ENCODE measurements at regions of chr2 and their contacts with region 1.

Region 1: DNA sequence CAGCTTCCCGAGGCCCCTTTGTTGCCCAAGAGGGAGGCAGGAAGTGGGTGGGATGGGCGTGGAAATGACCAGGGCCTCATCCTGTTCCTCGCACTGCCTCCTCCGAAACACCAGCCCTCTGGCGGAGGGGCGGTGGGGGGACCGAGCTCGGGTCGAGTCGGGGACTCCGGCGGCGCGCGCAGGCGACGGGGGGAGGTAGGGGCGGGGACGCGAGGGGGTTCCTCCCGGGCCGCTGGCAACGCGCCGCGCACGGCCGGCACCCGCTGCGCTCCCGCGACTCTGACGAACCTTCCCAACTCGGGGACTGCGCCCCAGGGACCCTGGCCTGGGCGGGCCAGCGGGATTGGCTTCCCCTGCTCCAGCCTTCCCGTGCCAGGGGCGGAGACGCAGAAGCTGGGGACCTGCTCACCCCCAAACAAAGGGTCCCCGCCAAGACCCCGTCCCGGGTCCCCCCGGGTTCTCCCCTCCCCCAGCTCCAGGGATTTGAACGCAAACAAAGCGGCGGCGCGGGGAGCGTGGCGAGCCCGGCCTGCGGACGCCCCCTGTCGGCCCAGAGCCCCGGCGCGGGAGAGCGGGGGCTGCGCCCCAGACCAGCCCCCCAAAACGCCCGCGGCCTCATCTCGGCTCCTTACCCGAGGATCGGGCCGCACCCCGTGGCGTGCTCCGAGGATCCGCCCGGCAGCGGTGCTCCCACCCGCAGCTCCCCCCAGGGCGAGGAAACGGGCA is 1.2 kb downstream of the SEMA4C start:
- DNase-seq: peak; percentile 62
- ATAC-seq: peak; percentile 22
- H3K4me3 ChIP-seq: peak overlapping the region; percentile 4 to 84 (median 57)
- H3K4me3 Mint-ChIP-seq: peak overlapping the region; percentile 78
- H3K27ac ChIP-seq: no peak overlapping the region
- H3K27ac Mint-ChIP-seq: no peak overlapping the region
- H3K4me1 ChIP-seq: peaks cover 29 to 37% of the 10 kb centered on the region in 2 donors
- H3K4me1 Mint-ChIP-seq: peaks cover 25% of the 10 kb centered on the region
- H3K27me3 ChIP-seq: peaks cover 0 to 41% (median 14%) of the 10 kb centered on the region in 4 experiments
- H3K27me3 Mint-ChIP-seq: peaks cover 30% of the 10 kb centered on the region
- CTCF ChIP-seq: peak; percentile 63

Region 2: DNA sequence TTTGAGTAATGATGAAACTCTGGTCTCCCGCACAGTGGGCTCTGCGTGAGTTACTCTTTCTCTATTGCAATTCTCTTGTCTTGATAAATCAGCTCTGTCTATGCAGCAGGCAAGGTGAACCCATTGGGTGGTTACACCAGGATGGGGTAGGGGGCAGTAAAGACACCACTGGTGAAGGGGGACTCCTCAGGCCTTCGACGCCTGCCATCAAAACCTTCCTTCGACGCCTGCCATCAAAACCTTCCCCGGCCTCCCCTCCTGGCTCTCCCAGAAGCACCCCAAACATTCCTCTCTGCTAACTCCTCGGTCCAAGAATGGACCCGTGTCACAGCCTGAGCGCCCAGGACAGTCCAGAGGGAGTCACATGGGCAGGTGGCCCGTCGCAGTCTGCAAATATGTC is 655.3 kb before region 1 on chr2:
- CTCF ChIA-PET with region 1: no interaction called
- POLR2A ChIA-PET with region 1: no interaction called
- intact Hi-C with region 1: no loop called
- DNase-seq: no peak
- ATAC-seq: no peak
- H3K4me3 ChIP-seq: no peak overlapping the region
- H3K4me3 Mint-ChIP-seq: no peak overlapping the region
- H3K27ac ChIP-seq: no peak overlapping the region
- H3K27ac Mint-ChIP-seq: no peak overlapping the region
- H3K4me1 ChIP-seq: peaks cover 8 to 31% of the 10 kb centered on the region in 2 donors
- H3K4me1 Mint-ChIP-seq: peaks cover 33% of the 10 kb centered on the region
- H3K27me3 ChIP-seq: no peaks in the 10 kb centered on the region
- H3K27me3 Mint-ChIP-seq: no peaks in the 10 kb centered on the region
- CTCF ChIP-seq: no peak

Region 3: GRCh38 chr2:96792772-96793749 is 75.7 kb before region 1 on chr2:
- CTCF ChIA-PET with region 1: no interaction called
- POLR2A ChIA-PET with region 1: no interaction called
- intact Hi-C with region 1: no loop called
- DNase-seq: no peak
- ATAC-seq: no peak
- H3K4me3 ChIP-seq: no peak overlapping the region
- H3K4me3 Mint-ChIP-seq: no peak overlapping the region
- H3K27ac ChIP-seq: no peak overlapping the region
- H3K27ac Mint-ChIP-seq: peak overlapping the region; percentile 11
- H3K4me1 ChIP-seq: no peaks in the 10 kb centered on the region
- H3K4me1 Mint-ChIP-seq: peaks cover 2% of the 10 kb centered on the region
- H3K27me3 ChIP-seq: no peaks in the 10 kb centered on the region
- H3K27me3 Mint-ChIP-seq: no peaks in the 10 kb centered on the region
- CTCF ChIP-seq: no peak

Region 4: DNA sequence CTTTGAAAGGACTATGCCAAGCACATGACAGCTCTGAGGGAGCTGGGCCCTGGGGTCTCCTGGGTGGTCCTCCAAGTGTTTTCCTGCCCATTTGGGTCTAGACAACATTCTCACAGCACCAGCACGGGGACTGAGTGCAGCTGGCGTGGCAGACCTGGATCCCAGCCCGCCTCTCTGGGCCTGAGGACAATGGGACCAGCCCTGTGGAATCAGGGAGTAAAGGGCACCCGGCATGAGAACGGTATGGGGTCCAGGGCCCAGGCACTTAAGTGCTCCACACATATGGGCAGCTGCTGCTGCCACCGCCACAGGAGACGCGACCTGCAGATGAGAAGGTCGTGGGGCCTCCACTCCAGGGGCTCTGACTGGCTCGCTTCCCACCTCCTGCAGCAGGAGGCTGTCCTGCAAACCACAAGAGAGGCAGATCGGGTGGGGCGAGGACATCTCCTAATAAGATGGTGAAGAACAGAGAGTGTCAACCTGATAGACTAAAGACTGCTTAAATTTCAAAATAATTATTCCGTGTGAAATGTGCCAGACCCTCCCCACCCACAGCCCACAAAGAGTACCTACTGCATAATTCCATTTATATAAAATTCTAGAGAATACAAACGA is 71.4 kb after region 1 on chr2:
- CTCF ChIA-PET with region 1: no interaction called
- POLR2A ChIA-PET with region 1: no interaction called
- intact Hi-C with region 1: loop called (anchors 5 kb)
- DNase-seq: no peak
- ATAC-seq: no peak
- H3K4me3 ChIP-seq: no peak overlapping the region
- H3K4me3 Mint-ChIP-seq: no peak overlapping the region
- H3K27ac ChIP-seq: no peak overlapping the region
- H3K27ac Mint-ChIP-seq: no peak overlapping the region
- H3K4me1 ChIP-seq: peaks cover 6 to 8% of the 10 kb centered on the region in 2 donors
- H3K4me1 Mint-ChIP-seq: peaks cover 6% of the 10 kb centered on the region
- H3K27me3 ChIP-seq: no peaks in the 10 kb centered on the region
- H3K27me3 Mint-ChIP-seq: peaks cover 3% of the 10 kb centered on the region
- CTCF ChIP-seq: no peak